Activated T-helper 1 cell treated with anti-CD3 and anti-CD28 coated beads, Interleukin-12 subunit alpha, Interleukin-12 subunit beta, Interleukin-2, Interleukin-4 antibody, amounts not matched to agents 30 ng/mL and 10 ng/mL and 1 ng/mL, durations not matched to agents 14 hours and 24 hours and 36 hours (primary cell): ENCODE measurements at regions of chr10 and their contacts with region 1.

Region 1: GRCh38 chr10:69318106-69318866 is 40.0 kb downstream of the HK1 start:
- DNase-seq: peak; percentile 91
- H3K4me3 Mint-ChIP-seq: peak overlapping the region; percentile 99
- H3K27ac Mint-ChIP-seq: peak overlapping the region; percentile 98
- H3K4me1 Mint-ChIP-seq: peaks cover 50% of the 10 kb centered on the region
- H3K27me3 Mint-ChIP-seq: peaks cover 8% of the 10 kb centered on the region

Region 2: GRCh38 chr10:68988530-68989316 is 329.6 kb before region 1 on chr10 and contains the start of gene KIFBP:
- intact Hi-C with region 1: loop called (anchors 5 kb)
- DNase-seq: peak; percentile 84
- H3K4me3 Mint-ChIP-seq: peak within 1 kb of the TSS; percentile 93
- H3K27ac Mint-ChIP-seq: peak within 1 kb of the TSS; percentile 87
- H3K4me1 Mint-ChIP-seq: peaks cover 34% of the 10 kb centered on the region
- H3K27me3 Mint-ChIP-seq: no peaks in the 10 kb centered on the region
- total RNA-seq, gene KIFBP: 16.4 and 16.9 TPM in 2 replicates

Region 3: GRCh38 chr10:69092959-69093850 is 225.1 kb before region 1 on chr10:
- intact Hi-C with region 1: loop called (anchors 2 kb)
- DNase-seq: peak; percentile 80
- H3K4me3 Mint-ChIP-seq: peak overlapping the region; percentile 45
- H3K27ac Mint-ChIP-seq: peak overlapping the region; percentile 72
- H3K4me1 Mint-ChIP-seq: peaks cover 51% of the 10 kb centered on the region
- H3K27me3 Mint-ChIP-seq: no peaks in the 10 kb centered on the region

Region 4: GRCh38 chr10:69262292-69262751 is 56.0 kb before region 1 on chr10:
- intact Hi-C with region 1: loop called (anchors 2 kb)
- DNase-seq: no peak
- H3K4me3 Mint-ChIP-seq: peak overlapping the region; percentile 3
- H3K27ac Mint-ChIP-seq: peak overlapping the region; percentile 32
- H3K4me1 Mint-ChIP-seq: peaks cover 22% of the 10 kb centered on the region
- H3K27me3 Mint-ChIP-seq: peaks cover 7% of the 10 kb centered on the region

Region 5: DNA sequence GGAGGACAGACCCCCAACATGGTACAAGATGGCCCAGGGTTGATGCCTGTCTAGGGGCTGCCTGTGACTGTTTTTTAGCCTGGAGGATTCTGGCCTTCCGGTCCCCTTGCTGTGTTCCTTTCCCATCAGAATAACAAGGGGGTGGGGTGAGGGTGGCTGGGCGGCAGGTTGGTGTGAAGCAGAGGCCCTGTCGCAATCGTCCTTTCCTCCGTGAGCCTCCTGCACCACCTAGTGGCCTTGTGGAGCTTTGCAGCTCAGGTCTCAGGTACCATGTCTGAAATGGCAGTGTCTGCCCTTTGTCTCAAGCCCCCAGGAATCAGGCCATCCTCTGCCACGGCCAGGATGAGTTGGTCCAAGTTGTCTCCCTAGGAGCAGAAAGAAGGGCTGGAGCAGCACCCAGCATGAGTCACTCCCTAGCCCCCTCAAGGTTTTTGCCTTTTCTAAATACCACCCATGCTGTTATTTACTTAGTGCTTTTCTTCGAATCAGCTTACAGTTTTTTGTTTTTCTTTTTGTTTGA is 74.3 kb after region 1 on chr10:
- intact Hi-C with region 1: loop called (anchors 1 kb)
- DNase-seq: peak; percentile 74
- H3K4me3 Mint-ChIP-seq: no peak overlapping the region
- H3K27ac Mint-ChIP-seq: peak overlapping the region; percentile 63
- H3K4me1 Mint-ChIP-seq: peaks cover 39% of the 10 kb centered on the region
- H3K27me3 Mint-ChIP-seq: no peaks in the 10 kb centered on the region

Region 6: GRCh38 chr10:69458426-69459108 is 140.3 kb after region 1 on chr10:
- intact Hi-C with region 1: no loop called
- DNase-seq: no peak
- H3K4me3 Mint-ChIP-seq: no peak overlapping the region
- H3K27ac Mint-ChIP-seq: no peak overlapping the region
- H3K4me1 Mint-ChIP-seq: peaks cover 25% of the 10 kb centered on the region
- H3K27me3 Mint-ChIP-seq: peaks cover under 1% of the 10 kb centered on the region

Region 7: GRCh38 chr10:69498711-69499476 is 180.6 kb after region 1 on chr10:
- intact Hi-C with region 1: no loop called
- DNase-seq: no peak
- H3K4me3 Mint-ChIP-seq: no peak overlapping the region
- H3K27ac Mint-ChIP-seq: no peak overlapping the region
- H3K4me1 Mint-ChIP-seq: no peaks in the 10 kb centered on the region
- H3K27me3 Mint-ChIP-seq: no peaks in the 10 kb centered on the region